ENCODE measurements at regions of chr11 and their contacts with region 1.

Region 1: DNA sequence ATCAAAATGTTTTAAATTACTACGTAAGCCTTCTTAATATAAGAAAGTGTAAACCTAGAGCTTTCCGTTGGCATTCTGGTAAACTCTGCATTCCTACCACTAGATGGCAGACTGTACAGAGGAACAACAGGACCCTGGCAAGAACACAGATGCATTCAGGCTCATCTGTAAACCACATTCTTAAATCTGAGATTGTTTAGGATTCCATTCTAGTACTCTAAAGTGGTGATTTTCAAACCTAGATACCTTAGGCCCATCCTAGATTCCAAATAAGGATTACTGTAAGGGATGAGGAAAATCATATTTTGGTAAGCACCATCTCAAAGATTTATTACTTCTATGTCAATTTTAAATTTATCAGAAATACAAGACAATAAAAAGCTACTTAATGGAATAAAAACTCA is 26.9 kb downstream of the PICALM start:
- DNase-seq: peak; percentile 60
- ATAC-seq: peak; percentile 83
- H3K4me3 ChIP-seq: no peak overlapping the region
- H3K27ac ChIP-seq: no peak overlapping the region
- H3K4me1 ChIP-seq: peaks cover 42% of the 10 kb centered on the region
- H3K27me3 ChIP-seq: no peaks in the 10 kb centered on the region
- CTCF ChIP-seq: peak; percentile 77 to 89 (median 81)
- EP300 ChIP-seq: no peak
- POLR2A ChIP-seq: no peak
- RAD21 ChIP-seq: peak; percentile 97

Region 2: DNA sequence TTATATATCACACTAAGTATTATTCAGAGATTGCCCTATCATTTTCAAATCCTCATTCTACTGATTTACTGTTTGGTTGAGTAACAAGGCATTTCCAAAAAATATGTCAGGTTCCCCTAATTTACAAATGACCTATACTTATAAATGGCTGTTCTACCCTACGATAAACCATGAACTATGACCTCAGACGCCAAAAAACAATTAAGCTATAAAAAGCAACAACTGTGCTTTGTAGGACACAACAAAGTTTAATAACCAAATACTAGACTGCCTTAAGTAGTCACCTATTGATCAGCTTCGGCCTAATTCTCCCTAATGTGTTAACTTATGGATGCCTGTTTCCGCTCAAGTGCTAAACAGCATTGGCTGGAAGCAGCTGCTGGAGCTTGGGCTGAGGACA is 26.3 kb before region 1 on chr11:
- CTCF ChIA-PET with region 1: interaction called, 11 read pairs
- POLR2A ChIA-PET with region 1: no interaction called
- RAD21 ChIA-PET with region 1: interaction called, 3 read pairs
- SMC1A ChIA-PET with region 1: interaction called, 5 read pairs
- in situ Hi-C with region 1: no loop called
- intact Hi-C with region 1: no loop called
- DNase-seq: no peak
- ATAC-seq: no peak
- H3K4me3 ChIP-seq: no peak overlapping the region
- H3K27ac ChIP-seq: peak overlapping the region; percentile 5; the same call in 1 of the 2 replicates
- H3K4me1 ChIP-seq: peaks cover 3% of the 10 kb centered on the region; the same call in 1 of the 2 replicates
- H3K27me3 ChIP-seq: no peaks in the 10 kb centered on the region
- CTCF ChIP-seq: no peak
- EP300 ChIP-seq: no peak
- POLR2A ChIP-seq: no peak
- RAD21 ChIP-seq: no peak

Region 3: GRCh38 chr11:86068951-86069407 is 27.0 kb after region 1 on chr11 and contains the start of gene PICALM:
- CTCF ChIA-PET with region 1: interaction called, 41 read pairs
- POLR2A ChIA-PET with region 1: interaction called, 20 read pairs
- RAD21 ChIA-PET with region 1: interaction called, 57 read pairs
- SMC1A ChIA-PET with region 1: interaction called, 91 read pairs
- in situ Hi-C with region 1: no loop called
- intact Hi-C with region 1: loop called (anchors 1 kb)
- DNase-seq: peak; percentile 97
- ATAC-seq: peak; percentile 80
- H3K4me3 ChIP-seq: peak within 1 kb of the TSS; percentile 95
- H3K27ac ChIP-seq: peak within 1 kb of the TSS; percentile 99
- H3K4me1 ChIP-seq: peaks cover 10% of the 10 kb centered on the region
- H3K27me3 ChIP-seq: no peaks in the 10 kb centered on the region
- CTCF ChIP-seq: no peak
- EP300 ChIP-seq: peak in 1 of 2 experiments; percentile 14; a peak in 1 of 4 replicates
- POLR2A ChIP-seq: peak; percentile 81
- RAD21 ChIP-seq: no peak
- polyA plus RNA-seq, gene PICALM: 4.3 to 10.4 TPM

Region 4: GRCh38 chr11:86124834-86125233 is 82.9 kb after region 1 on chr11:
- CTCF ChIA-PET with region 1: no interaction called
- POLR2A ChIA-PET with region 1: no interaction called
- RAD21 ChIA-PET with region 1: interaction called, 4 read pairs
- SMC1A ChIA-PET with region 1: interaction called, 10 read pairs
- in situ Hi-C with region 1: no loop called
- intact Hi-C with region 1: no loop called
- DNase-seq: no peak
- ATAC-seq: peak; percentile 89
- H3K4me3 ChIP-seq: no peak overlapping the region
- H3K27ac ChIP-seq: no peak overlapping the region
- H3K4me1 ChIP-seq: peaks cover 11% of the 10 kb centered on the region
- H3K27me3 ChIP-seq: no peaks in the 10 kb centered on the region
- CTCF ChIP-seq: no peak
- EP300 ChIP-seq: no peak; a peak in 1 of 4 replicates
- POLR2A ChIP-seq: no peak
- RAD21 ChIP-seq: no peak

Region 5: GRCh38 chr11:86202013-86202336 is 160.0 kb after region 1 on chr11:
- CTCF ChIA-PET with region 1: interaction called, 154 read pairs
- POLR2A ChIA-PET with region 1: interaction called, 3 read pairs
- RAD21 ChIA-PET with region 1: interaction called, 27 read pairs
- SMC1A ChIA-PET with region 1: interaction called, 126 read pairs
- in situ Hi-C with region 1: no loop called
- intact Hi-C with region 1: no loop called
- DNase-seq: no peak
- ATAC-seq: peak; percentile 85
- H3K4me3 ChIP-seq: peak overlapping the region; percentile 66
- H3K27ac ChIP-seq: peak overlapping the region; percentile 82
- H3K4me1 ChIP-seq: peaks cover 15% of the 10 kb centered on the region
- H3K27me3 ChIP-seq: no peaks in the 10 kb centered on the region
- CTCF ChIP-seq: no peak
- EP300 ChIP-seq: no peak
- POLR2A ChIP-seq: no peak
- RAD21 ChIP-seq: no peak

Region 6: DNA sequence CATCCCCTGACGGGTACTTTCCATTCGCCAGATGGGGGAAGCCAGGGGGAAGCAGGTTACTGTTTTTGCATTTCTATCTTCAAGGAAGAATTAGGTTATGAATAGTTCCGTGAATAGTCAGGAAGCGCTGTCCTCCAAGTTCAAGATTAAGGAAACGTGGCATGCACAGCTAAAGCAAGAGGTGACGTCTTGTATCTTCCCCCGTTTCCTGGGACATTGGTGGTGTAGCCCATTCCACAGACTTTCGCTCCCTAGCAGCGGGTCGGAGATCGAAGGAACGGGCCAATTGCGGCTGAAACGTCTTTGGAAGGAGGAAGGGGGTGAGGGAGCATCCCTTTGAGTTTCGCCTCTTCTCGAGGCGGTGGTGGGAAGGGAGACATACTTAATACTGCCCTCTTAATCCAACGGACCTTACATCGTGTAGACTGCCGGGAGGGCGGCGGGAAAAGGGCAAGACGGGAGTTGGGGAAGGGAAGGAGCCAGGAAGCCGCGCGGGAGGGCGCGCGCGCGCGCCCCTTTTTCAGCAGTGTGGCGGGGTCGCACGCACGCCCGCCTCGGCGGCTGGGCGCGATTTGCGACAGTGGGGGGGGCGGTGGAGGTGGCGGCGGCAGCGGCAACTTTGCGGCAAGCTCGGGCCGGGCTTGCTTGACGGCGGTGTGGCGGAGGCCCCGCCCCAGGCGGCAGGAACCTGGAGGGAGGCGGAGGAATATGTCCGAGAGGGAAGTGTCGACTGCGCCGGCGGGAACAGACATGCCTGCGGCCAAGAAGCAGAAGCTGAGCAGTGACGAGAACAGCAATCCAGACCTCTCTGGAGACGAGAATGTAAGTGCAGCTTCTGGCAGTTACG is 202.8 kb after region 1 on chr11 and contains the start of gene EED:
- CTCF ChIA-PET with region 1: interaction called, 5 read pairs
- POLR2A ChIA-PET with region 1: no interaction called
- RAD21 ChIA-PET with region 1: interaction called, 5 read pairs
- SMC1A ChIA-PET with region 1: interaction called, 7 read pairs
- in situ Hi-C with region 1: no loop called
- intact Hi-C with region 1: loop called (anchors 2 kb)
- DNase-seq: peak; percentile 86
- ATAC-seq: peak; percentile 77
- H3K4me3 ChIP-seq: peak within 1 kb of the TSS; percentile 81
- H3K27ac ChIP-seq: peak within 1 kb of the TSS; percentile 98
- H3K4me1 ChIP-seq: peaks cover 12% of the 10 kb centered on the region
- H3K27me3 ChIP-seq: no peaks in the 10 kb centered on the region
- CTCF ChIP-seq: no peak
- EP300 ChIP-seq: peak in 1 of 2 experiments; percentile 25; a peak in 1 of 4 replicates
- POLR2A ChIP-seq: peak; percentile 80
- RAD21 ChIP-seq: no peak
- polyA plus RNA-seq, gene EED: 101 to 140 TPM

Measured in GM12878 (cell line).